Transverse colon (tissue), 4 donors: ENCODE measurements at regions of chr2 and their contacts with region 1.

Region 1: DNA sequence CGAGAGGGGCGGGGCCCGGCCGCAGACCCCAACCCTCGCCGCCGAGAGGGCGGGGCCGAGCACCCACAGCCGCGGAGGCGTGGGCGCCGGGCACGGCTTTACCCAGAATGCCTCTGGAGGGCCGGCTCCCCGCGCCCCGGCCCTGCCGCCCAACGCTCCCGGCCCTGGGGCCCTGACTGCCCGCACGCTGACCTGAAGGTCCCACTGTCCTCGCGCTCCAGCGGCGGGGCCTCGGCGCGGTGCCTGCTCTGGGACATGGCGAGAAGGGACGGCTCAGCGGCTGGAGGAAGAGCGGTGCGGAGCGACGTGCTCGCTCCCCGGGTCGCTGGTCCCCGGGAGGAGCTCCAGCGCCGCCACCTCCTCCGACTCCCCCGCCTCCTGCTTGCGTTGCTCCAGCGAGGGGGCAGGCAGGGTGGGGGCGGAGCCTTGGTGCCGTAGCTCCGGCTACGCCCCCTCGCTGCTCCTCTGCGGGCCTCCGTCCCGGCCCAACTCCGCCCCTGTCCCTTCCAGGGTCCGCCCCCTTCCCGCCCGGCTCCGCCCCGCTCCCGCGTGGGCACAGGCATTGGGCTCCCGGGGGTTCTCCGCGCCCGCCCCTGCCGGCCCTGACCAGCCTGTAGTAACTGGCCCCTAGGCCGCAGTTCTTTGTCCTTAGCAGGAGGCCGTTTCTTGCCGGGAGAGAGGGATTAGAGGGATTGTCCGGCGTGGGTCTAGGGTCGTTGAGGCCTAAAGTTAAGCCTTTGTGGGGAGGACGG is at the starts of genes PJVK and PRKRA:
- DNase-seq: peak; percentile 98
- H3K4me3 ChIP-seq: peak within 1 kb of the TSS; percentile 53 to 99 (median 82)
- H3K27ac ChIP-seq: peak within 1 kb of the TSS; percentile 95 to 100 (median 96)
- H3K4me1 ChIP-seq: peaks cover 6 to 31% (median 22%) of the 10 kb centered on the region in 4 donors
- H3K27me3 ChIP-seq: no peaks in the 10 kb centered on the region
- CTCF ChIP-seq: peak in 1 of 5 experiments; percentile 2
- EP300 ChIP-seq: no peak
- POLR2A ChIP-seq: peak; percentile 95
- total RNA-seq, gene PJVK: 1.6 to 3.2 TPM in 2 of 4 donors, not detected in the others
- total RNA-seq, gene PRKRA: 35.6 to 317 (median 56.9) TPM

Region 2: GRCh38 chr2:177783835-177784744 is 666.9 kb before region 1 on chr2:
- in situ Hi-C with region 1: no loop called
- intact Hi-C with region 1: loop called (anchors 5 kb)
- DNase-seq: no peak
- H3K4me3 ChIP-seq: no peak overlapping the region
- H3K27ac ChIP-seq: peak overlapping the region in 3 of 4 donors; percentile 21 to 36 (median 25)
- H3K4me1 ChIP-seq: peaks cover 4 to 16% (median 6%) of the 10 kb centered on the region in 4 donors
- H3K27me3 ChIP-seq: no peaks in the 10 kb centered on the region
- CTCF ChIP-seq: no peak
- EP300 ChIP-seq: no peak
- POLR2A ChIP-seq: no peak

Region 3: GRCh38 chr2:178359192-178359912 is 91.6 kb before region 1 on chr2:
- in situ Hi-C with region 1: no loop called
- intact Hi-C with region 1: no loop called
- DNase-seq: no peak
- H3K4me3 ChIP-seq: no peak overlapping the region
- H3K27ac ChIP-seq: no peak overlapping the region
- H3K4me1 ChIP-seq: no peaks in the 10 kb centered on the region
- H3K27me3 ChIP-seq: no peaks in the 10 kb centered on the region
- CTCF ChIP-seq: no peak
- EP300 ChIP-seq: no peak
- POLR2A ChIP-seq: no peak

Region 4: DNA sequence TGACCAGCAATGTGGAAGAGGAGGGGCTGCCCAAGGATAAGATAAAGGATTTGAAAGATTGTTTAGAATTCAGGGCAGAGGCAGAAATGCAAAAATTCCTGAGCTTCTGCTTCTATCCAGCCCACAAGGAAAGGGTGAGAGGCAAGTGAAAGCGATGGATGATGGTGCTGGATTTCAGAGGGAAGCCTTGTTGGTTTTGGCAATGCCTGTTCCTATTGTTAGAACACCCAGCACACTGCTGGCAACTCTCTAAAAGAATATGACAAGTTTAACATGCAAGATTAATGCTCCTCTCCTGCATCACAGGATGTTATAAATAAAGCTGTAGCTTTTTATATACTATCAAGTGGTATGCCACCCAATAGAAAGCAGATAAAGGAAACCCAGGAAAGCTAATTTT is 1317.8 kb after region 1 on chr2:
- in situ Hi-C with region 1: no loop called
- intact Hi-C with region 1: no loop called
- DNase-seq: no peak
- H3K4me3 ChIP-seq: no peak overlapping the region
- H3K27ac ChIP-seq: no peak overlapping the region
- H3K4me1 ChIP-seq: no peaks in the 10 kb centered on the region
- H3K27me3 ChIP-seq: no peaks in the 10 kb centered on the region
- CTCF ChIP-seq: no peak
- EP300 ChIP-seq: no peak
- POLR2A ChIP-seq: no peak